GM10248 (cell line): ENCODE measurements at regions of chr3 and their contacts with region 1.

Region 1: DNA sequence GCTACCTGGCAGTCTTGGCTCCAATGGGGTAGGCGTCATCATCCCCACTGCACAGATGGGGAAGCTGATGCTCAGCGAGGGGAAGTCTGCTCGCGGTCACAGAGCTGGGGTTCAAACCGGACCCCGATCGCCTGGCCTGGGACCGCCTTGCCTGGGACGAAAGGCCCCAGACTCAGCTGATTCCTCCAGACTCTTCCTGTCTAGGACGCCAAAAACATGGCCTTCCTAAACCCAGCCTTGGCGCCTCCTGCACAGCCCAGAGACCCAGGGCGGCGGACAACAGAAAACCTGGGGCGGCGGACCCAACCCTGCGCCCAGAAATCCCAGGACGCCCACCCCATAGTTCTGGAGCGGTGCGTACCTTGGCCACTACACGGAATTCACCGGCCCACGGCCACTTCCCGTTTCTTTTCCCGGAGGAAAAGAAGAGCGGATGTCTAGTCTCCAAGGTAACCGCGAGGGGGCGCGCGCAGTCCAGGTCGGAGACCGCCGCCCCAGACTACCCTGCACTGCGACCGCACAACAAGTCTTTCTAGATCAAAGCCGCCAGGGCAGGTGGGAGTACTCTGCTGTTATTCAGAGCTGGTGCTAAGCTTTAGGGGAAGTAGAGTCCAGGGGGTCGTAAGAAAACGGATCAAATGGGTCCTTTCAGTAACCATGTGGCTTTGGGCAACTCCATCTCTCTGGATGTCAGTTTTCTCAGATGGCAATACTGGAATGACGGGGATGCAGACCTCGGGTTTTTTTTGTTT is 4.9 kb upstream of the IL17RD start:
- DNase-seq: peak; percentile 74
- CTCF ChIP-seq: peak; percentile 88

Region 2: GRCh38 chr3:57158813-57159738 is 11.0 kb before region 1 on chr3:
- CTCF ChIA-PET with region 1: interaction called, 10 read pairs
- POLR2A ChIA-PET with region 1: no interaction called
- DNase-seq: no peak
- CTCF ChIP-seq: no peak